ENCODE measurements at regions of chr1 and their contacts with region 1.

Region 1: GRCh38 chr1:223712194-223712849 is at the start of gene CAPN2:
- DNase-seq: peak in 40 of 42 donors; percentile 66 to 92 (median 80)

Region 2: DNA sequence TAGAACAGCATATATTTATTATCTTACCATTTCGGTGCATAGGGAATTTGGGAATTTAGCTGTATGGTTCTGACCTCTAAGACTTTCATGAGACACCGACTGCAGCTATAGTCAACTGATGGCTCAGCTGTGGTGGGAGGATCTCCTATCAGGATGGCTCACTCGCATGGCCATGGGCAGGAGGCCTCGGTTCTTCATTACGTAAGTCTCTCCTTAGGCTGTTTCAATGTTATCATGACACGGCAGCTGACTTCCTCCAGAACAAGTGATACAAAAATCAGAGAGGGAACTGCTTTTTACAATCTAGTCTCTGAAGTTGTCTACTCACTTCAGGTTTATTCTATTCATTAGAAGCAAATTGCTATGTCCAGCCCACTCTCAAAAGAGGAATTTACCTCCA is 33.5 kb before region 1 on chr1:
- intact Hi-C with region 1: no loop called
- DNase-seq: no peak

Region 3: GRCh38 chr1:223748773-223749733 is 36.7 kb after region 1 on chr1:
- intact Hi-C with region 1: loop called (anchors 2 kb)
- DNase-seq: peak; percentile 22 to 87 (median 69)